ENCODE measurements at regions of chr5 and their contacts with region 1.

Region 1: DNA sequence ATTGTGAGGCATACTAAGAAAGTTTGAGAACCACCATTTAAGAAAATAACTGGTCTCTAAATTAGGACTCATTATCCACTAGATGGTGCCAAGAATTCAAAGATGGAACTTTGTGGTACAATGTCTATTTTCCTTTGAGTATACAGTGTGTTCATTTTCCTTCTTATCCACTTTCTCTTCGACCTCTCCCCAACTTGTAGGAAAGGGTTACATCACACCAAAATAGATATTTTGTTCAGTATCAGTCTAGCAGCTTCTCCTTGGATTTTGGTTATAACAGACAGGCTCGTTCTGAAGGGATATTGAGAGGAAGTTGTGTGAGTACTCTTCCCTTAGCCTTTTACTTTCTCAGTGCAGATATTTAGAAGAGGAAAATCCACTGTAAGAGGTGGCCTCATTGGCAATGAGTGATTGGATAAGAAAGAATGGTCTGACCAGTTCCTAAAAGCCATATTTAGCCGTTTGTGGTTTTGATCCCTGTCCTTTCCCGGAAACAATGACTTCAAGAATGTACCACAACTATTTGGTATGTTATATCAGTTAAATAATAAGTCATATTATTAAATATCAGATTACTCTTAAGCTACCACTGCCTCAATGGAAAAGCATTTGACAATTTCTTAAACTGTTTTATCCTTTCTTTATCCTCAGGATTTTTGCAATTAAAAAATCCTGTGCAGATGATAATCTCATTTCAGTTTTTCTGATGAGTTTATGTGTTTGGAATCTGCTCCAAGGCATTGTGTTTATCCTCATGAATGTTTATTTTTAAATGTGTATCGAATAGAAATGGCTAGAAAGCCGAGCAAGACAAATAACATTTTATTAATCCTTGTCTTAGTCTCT is 69.0 kb upstream of the GRAMD2B start:
- DNase-seq: peak in 2 of 42 donors; percentile 10 to 37

Region 2: DNA sequence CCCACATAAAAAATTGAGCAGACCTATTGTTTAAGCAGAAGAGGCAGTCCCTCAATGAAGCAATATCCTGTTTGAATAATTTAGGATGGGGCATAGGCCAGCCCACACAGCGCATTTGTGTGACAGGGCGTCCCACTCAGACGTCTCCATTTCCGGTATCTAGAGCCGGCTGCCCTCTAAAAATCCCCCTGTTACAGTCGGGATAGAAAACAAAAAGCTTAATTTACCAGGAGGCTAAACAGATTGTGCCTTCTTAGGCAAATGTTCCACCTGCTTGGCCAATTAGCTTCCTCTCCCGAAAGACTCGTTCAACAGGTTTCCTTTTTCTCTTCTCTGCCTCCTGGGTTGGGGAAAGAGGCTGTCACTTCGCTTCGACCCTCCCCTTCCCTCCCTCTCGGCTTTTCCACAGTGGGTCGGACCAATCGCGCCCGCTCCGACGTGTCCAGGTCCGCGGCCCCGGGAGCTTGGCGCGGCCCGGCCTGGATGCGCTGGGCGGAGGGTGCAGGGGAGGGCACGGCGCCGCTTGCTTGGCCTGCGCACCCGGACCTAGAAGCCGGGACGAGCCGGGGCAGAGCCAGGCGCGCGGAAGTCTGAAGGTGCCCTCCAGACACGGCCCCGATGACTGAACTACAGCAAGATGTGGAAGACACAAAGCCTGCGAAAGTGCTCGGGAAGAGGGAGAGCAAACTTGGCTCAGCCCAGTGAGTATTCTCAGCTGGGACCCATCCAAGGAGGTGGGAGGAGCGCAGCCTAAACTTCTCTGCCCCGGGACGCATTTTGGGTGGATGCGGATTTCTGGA is 69.0 kb after region 1 on chr5 and contains the start of gene GRAMD2B:
- intact Hi-C with region 1: no loop called
- DNase-seq: peak; percentile 64 to 90 (median 80)

Region 3: DNA sequence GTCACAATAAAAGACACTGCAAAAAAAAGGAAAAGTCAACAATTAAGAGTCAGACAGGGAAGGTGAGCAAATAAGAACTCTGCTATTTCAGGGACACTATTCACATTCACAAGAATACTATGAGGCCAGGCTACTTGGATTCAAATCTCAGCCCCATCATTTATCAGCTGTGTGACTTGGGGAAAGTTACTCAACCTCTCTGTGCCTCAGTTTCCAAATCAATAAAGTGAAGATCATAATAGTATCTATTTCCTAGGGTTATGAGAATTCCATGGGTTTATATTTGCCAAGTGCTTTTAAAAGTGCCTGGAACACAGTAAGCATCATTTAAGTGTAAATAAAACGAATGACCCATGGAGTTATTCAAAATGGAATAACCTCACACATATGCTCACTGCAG is 184.3 kb after region 1 on chr5:
- intact Hi-C with region 1: loop called (anchors 2 kb)
- DNase-seq: no peak

Measured in head of caudate nucleus (tissue), 42 donors.